Colonic mucosa (tissue), 4 donors: ENCODE measurements at regions of chr2 and their contacts with region 1.

Region 1: GRCh38 chr2:113370478-113371091 is 66.9 kb upstream of the ZNG1B start:
- DNase-seq: peak; percentile 74
- H3K4me3 ChIP-seq: no peak overlapping the region
- H3K27ac ChIP-seq: no peak overlapping the region
- H3K4me1 ChIP-seq: no peaks in the 10 kb centered on the region
- H3K27me3 ChIP-seq: no peaks in the 10 kb centered on the region
- CTCF ChIP-seq: peak; percentile 56

Region 2: DNA sequence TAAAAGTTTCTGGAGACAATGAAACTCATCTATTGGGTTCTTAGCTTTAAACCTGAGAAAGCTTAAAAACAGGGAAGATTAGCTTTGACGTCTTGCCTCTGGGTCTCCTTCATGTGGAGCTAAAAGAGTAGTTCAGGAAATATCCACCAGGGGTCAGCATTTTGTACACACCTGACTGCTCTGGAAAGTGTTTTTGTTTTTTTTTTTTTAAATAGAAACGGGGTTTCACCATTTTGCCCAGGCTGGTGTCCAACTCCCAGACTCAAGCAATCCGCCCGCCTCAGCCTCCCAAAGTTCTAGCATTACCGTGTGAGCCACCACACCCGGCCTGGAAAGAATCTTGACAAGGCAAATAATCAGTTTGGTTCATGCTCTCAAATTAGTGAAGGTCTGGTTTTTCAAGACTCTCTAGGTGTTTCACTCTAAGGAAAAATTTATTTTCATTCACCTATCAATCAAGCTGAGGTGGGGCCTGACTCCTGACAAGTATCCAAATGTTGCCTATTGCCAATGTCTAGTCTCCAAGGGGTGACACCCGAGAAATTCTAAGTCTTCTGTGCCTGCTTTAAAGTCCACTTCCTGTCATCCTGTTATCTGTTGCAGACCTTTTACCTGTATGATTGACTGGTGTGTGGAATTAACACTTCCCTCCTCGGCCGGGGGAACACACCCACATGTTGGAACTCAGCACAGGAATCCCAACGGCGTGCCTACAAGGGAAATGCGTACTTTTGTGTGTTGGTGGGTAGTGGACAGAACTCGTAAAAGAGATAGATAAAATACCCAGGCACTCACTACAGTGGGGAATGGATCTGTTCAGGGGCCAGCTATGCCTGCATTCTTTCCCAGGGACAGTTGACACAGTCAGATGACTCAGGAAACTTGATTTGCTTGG is 231.9 kb before region 1 on chr2:
- intact Hi-C with region 1: loop called (anchors 5 kb)
- DNase-seq: peak; percentile 77
- H3K4me3 ChIP-seq: no peak overlapping the region
- H3K27ac ChIP-seq: no peak overlapping the region
- H3K4me1 ChIP-seq: no peaks in the 10 kb centered on the region
- H3K27me3 ChIP-seq: no peaks in the 10 kb centered on the region
- CTCF ChIP-seq: peak; percentile 86

Region 3: DNA sequence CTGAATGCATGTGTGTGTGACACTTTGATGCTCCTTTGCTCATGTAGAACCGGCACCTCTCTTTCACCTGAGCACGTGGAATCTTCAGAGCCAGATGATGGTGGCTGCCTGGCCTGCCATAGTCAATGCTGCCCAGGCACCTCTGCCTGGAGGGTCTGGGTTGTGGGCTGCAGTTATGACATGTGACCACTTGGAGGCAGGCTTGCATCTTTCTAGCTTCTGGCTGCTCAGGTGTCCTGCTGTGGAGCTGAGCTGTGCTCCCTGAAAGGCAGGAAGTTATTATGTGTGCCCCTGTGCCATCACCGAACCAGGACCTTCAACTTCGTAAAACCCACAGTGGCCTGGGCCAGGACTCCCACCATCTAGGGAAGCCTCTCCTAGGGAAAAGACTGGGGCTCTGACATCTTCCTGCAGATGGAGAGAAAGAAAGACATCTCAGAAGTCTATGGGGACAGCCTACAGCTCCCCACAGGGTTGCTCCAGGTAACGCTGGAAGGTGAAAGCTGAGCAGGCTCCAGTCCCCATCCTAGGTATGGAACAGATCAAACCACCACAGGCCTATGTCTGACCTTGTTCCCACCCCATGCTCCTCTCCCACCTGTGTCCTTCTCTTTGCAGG is 166.6 kb before region 1 on chr2:
- intact Hi-C with region 1: loop called (anchors 2 kb)
- DNase-seq: peak; percentile 81
- H3K4me3 ChIP-seq: no peak overlapping the region
- H3K27ac ChIP-seq: no peak overlapping the region
- H3K4me1 ChIP-seq: no peaks in the 10 kb centered on the region
- H3K27me3 ChIP-seq: no peaks in the 10 kb centered on the region
- CTCF ChIP-seq: peak; percentile 70

Region 4: DNA sequence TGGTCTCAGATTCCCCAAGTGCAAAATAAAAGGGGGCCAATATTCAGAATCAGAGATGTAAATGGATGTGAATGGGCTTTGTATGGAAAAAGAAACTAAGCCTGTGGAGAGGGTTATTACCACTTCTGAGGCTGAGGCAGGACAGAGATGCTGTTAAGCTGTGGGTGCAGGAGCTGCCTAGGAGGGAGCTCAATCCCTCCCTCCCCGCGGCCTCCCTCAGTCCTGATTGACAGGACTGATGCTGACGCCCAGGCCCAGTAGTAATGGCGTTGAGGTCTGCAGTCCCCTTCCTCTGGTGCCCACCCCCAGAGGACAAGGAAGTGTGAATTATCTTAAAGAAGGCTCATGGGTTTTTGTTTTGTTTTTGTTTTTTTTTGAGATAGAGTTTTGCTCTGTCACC is 156.4 kb before region 1 on chr2:
- intact Hi-C with region 1: no loop called
- DNase-seq: no peak
- H3K4me3 ChIP-seq: no peak overlapping the region
- H3K27ac ChIP-seq: no peak overlapping the region
- H3K4me1 ChIP-seq: peaks cover 8% of the 10 kb centered on the region
- H3K27me3 ChIP-seq: no peaks in the 10 kb centered on the region
- CTCF ChIP-seq: no peak

Region 5: DNA sequence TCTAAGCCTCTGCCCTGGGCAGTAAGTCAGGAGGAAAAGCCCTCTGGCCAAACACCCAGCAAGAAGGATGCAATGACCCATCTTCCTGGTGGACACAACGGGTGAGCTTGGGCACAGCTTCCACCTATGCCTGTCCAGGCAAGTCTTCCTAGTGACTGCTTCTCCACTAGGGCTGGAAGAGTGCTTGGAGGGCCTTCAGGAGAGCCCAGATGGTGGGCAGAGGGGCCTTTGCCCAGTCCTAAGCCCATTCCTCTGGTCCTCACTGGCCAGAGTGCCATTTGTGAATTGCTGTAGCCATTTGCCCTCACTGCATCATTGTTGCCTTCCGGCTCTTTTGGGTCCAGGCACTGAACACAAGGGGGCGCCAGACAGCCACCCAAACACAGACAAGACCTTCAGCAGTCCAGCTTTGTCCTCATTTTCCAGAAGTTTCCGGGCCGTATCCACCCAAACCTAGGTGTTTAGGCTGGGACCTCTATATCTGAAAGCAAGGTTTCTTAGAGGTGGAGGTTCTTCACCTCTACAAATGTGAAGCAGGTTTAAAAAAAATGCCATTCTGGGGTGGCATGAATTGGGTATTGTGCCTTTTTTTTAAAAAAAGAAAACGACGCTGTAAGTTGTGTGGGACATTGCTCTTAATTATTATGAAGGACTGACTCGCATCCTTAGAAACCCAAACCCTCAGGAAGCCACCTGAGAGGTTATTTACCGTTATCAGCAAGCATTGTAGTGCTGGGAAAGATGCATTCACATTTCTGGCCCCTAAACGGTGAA is 121.4 kb before region 1 on chr2:
- intact Hi-C with region 1: loop called (anchors 2 kb)
- DNase-seq: peak; percentile 86
- H3K4me3 ChIP-seq: no peak overlapping the region
- H3K27ac ChIP-seq: no peak overlapping the region
- H3K4me1 ChIP-seq: no peaks in the 10 kb centered on the region
- H3K27me3 ChIP-seq: no peaks in the 10 kb centered on the region
- CTCF ChIP-seq: peak; percentile 94

Region 6: DNA sequence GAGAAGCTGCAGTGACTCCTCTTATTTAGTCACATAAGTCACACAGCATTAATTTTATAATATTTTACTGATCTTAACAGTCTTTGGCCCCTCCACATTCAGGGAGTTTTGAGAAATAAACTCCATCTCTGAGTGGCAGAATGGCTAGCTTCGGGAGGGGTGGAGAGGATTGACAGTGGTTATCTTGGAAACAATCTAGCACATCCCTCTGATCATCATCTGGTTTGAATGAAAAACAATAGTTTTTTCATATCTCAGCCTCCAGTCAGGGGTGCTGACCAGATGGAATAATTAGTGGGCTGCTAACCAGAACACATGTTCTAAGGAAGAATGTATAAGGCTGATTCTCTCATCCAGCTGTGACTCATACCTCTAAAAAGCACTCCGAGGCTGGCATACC is 1549.4 kb after region 1 on chr2:
- intact Hi-C with region 1: no loop called
- DNase-seq: no peak
- H3K4me3 ChIP-seq: no peak overlapping the region
- H3K27ac ChIP-seq: no peak overlapping the region
- H3K4me1 ChIP-seq: no peaks in the 10 kb centered on the region
- H3K27me3 ChIP-seq: no peaks in the 10 kb centered on the region
- CTCF ChIP-seq: no peak